Thyroid gland (tissue), 4 donors: ENCODE measurements at regions of chr2 and their contacts with region 1.

Region 1: GRCh38 chr2:239035361-239036078 is 187.6 kb downstream of the TWIST2 start:
- DNase-seq: peak; percentile 23 to 41
- H3K4me3 ChIP-seq: no peak overlapping the region
- H3K27ac ChIP-seq: no peak overlapping the region
- H3K4me1 ChIP-seq: peaks cover 0 to 3% of the 10 kb centered on the region in 2 donors
- H3K27me3 ChIP-seq: no peaks in the 10 kb centered on the region
- CTCF ChIP-seq: peak; percentile 45 to 93 (median 66)
- POLR2A ChIP-seq: no peak

Region 2: DNA sequence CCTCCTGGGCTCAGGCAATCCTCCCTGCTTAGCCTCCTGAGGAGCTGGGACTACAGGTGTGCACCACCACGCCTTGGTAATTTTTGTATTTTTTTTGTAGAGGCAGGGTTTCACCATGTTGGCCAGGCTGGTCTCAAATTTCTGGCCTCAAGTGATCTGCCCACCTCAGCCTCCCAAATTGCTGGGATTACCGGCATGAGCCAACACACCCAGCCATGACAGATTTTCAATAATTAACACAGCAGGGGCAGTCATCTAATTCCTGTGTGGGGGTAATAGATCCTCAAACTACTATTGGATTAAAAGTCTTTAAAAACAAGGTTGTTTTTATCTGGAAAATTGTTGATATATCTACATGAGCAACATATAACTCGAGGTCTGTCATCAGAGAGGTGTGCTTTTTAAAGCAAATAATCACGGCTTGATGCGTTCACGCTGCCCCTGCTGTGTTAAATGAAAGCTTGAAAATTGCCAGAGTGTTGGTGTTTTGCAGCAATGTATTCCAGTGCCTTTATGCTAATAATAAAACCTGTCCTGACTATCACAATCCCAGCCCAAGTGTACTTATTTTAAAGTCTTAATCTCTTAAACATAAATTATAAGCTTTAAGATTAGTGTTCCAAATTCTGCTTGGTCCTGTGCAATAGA is 644.4 kb before region 1 on chr2:
- intact Hi-C with region 1: no loop called
- DNase-seq: no peak
- H3K4me3 ChIP-seq: no peak overlapping the region
- H3K27ac ChIP-seq: peak overlapping the region in 2 of 3 donors; percentile 73 to 74
- H3K4me1 ChIP-seq: peaks cover 19 to 23% of the 10 kb centered on the region in 2 donors
- H3K27me3 ChIP-seq: no peaks in the 10 kb centered on the region
- CTCF ChIP-seq: no peak
- POLR2A ChIP-seq: no peak

Region 3: GRCh38 chr2:238875101-238875470 is 160.4 kb before region 1 on chr2:
- intact Hi-C with region 1: no loop called
- DNase-seq: no peak
- H3K4me3 ChIP-seq: no peak overlapping the region
- H3K27ac ChIP-seq: no peak overlapping the region
- H3K4me1 ChIP-seq: no peaks in the 10 kb centered on the region
- H3K27me3 ChIP-seq: no peaks in the 10 kb centered on the region
- CTCF ChIP-seq: no peak
- POLR2A ChIP-seq: no peak

Region 4: GRCh38 chr2:239724194-239724849 is 688.8 kb after region 1 on chr2:
- intact Hi-C with region 1: loop called (anchors 10 kb)
- DNase-seq: no peak
- H3K4me3 ChIP-seq: no peak overlapping the region
- H3K27ac ChIP-seq: no peak overlapping the region
- H3K4me1 ChIP-seq: no peaks in the 10 kb centered on the region
- H3K27me3 ChIP-seq: no peaks in the 10 kb centered on the region
- CTCF ChIP-seq: no peak
- POLR2A ChIP-seq: no peak

Region 5: GRCh38 chr2:239882331-239882732 is 846.8 kb after region 1 on chr2:
- intact Hi-C with region 1: loop called (anchors 5 kb)
- DNase-seq: peak; percentile 69 to 70
- H3K4me3 ChIP-seq: no peak overlapping the region
- H3K27ac ChIP-seq: no peak overlapping the region
- H3K4me1 ChIP-seq: peaks cover 15 to 16% of the 10 kb centered on the region in 2 donors
- H3K27me3 ChIP-seq: no peaks in the 10 kb centered on the region
- CTCF ChIP-seq: peak; percentile 22 to 70 (median 64)
- POLR2A ChIP-seq: no peak